ENCODE measurements at regions of chr3 and their contacts with region 1.

Region 1: GRCh38 chr3:186783073-186783730 is at the start of gene EIF4A2:
- DNase-seq: peak; percentile 84 to 96 (median 89)
- ATAC-seq: peak; percentile 68
- H3K4me3 ChIP-seq: peak within 1 kb of the TSS; percentile 92
- H3K4me3 Mint-ChIP-seq: peak within 1 kb of the TSS; percentile 95
- H3K27ac ChIP-seq: peak within 1 kb of the TSS; percentile 96 to 99
- H3K27ac Mint-ChIP-seq: peak within 1 kb of the TSS; percentile 96
- H3K4me1 ChIP-seq: peaks cover 32% of the 10 kb centered on the region
- H3K4me1 Mint-ChIP-seq: peaks cover 59% of the 10 kb centered on the region
- H3K27me3 ChIP-seq: no peaks in the 10 kb centered on the region
- H3K27me3 Mint-ChIP-seq: peaks cover 5% of the 10 kb centered on the region
- CTCF ChIP-seq: no peak
- total RNA-seq, gene EIF4A2: 1,039 to 1,046 TPM

Region 2: GRCh38 chr3:185937689-185938463 is 845.3 kb before region 1 on chr3 and contains the start of gene TRA2B:
- CTCF ChIA-PET with region 1: no interaction called
- POLR2A ChIA-PET with region 1: interaction called, 72 read pairs
- intact Hi-C with region 1: loop called (anchors 5 kb)
- DNase-seq: peak; percentile 97 to 99 (median 98)
- ATAC-seq: peak; percentile 88
- H3K4me3 ChIP-seq: peak within 1 kb of the TSS; percentile 96
- H3K4me3 Mint-ChIP-seq: peak within 1 kb of the TSS; percentile 97
- H3K27ac ChIP-seq: peak within 1 kb of the TSS; percentile 100
- H3K27ac Mint-ChIP-seq: peak within 1 kb of the TSS; percentile 98
- H3K4me1 ChIP-seq: peaks cover 7% of the 10 kb centered on the region
- H3K4me1 Mint-ChIP-seq: peaks cover 54% of the 10 kb centered on the region
- H3K27me3 ChIP-seq: no peaks in the 10 kb centered on the region
- H3K27me3 Mint-ChIP-seq: no peaks in the 10 kb centered on the region
- CTCF ChIP-seq: no peak
- total RNA-seq, gene TRA2B: 549 to 585 TPM

Region 3: GRCh38 chr3:186617038-186617946 is 165.9 kb before region 1 on chr3:
- CTCF ChIA-PET with region 1: interaction called, 5 read pairs
- POLR2A ChIA-PET with region 1: interaction called, 25 read pairs
- intact Hi-C with region 1: no loop called
- DNase-seq: peak; percentile 72 to 95 (median 84)
- ATAC-seq: peak; percentile 97
- H3K4me3 ChIP-seq: peak overlapping the region; percentile 19
- H3K4me3 Mint-ChIP-seq: peak overlapping the region; percentile 46
- H3K27ac ChIP-seq: no peak overlapping the region
- H3K27ac Mint-ChIP-seq: peak overlapping the region; percentile 30
- H3K4me1 ChIP-seq: peaks cover 19% of the 10 kb centered on the region
- H3K4me1 Mint-ChIP-seq: peaks cover 19% of the 10 kb centered on the region
- H3K27me3 ChIP-seq: peaks cover 0 to 9% of the 10 kb centered on the region in 2 experiments
- H3K27me3 Mint-ChIP-seq: peaks cover 30% of the 10 kb centered on the region
- CTCF ChIP-seq: peak; percentile 94

Region 4: GRCh38 chr3:186806089-186807055 is 23.2 kb after region 1 on chr3 and contains the start of gene RFC4:
- CTCF ChIA-PET with region 1: interaction called, 5 read pairs
- POLR2A ChIA-PET with region 1: interaction called, 112 read pairs
- intact Hi-C with region 1: loop called (anchors 1 kb)
- DNase-seq: peak; percentile 67 to 90 (median 82)
- ATAC-seq: peak; percentile 88
- H3K4me3 ChIP-seq: peak within 1 kb of the TSS; percentile 83
- H3K4me3 Mint-ChIP-seq: peak within 1 kb of the TSS; percentile 98
- H3K27ac ChIP-seq: peak within 1 kb of the TSS; percentile 73 to 92
- H3K27ac Mint-ChIP-seq: peak within 1 kb of the TSS; percentile 98
- H3K4me1 ChIP-seq: peaks cover 25% of the 10 kb centered on the region
- H3K4me1 Mint-ChIP-seq: peaks cover 27% of the 10 kb centered on the region
- H3K27me3 ChIP-seq: no peaks in the 10 kb centered on the region
- H3K27me3 Mint-ChIP-seq: no peaks in the 10 kb centered on the region
- CTCF ChIP-seq: no peak
- total RNA-seq, gene RFC4: 8.6 to 12.6 TPM

Region 5: GRCh38 chr3:186909078-186909853 is 126.1 kb after region 1 on chr3:
- CTCF ChIA-PET with region 1: no interaction called
- POLR2A ChIA-PET with region 1: interaction called, 13 read pairs
- intact Hi-C with region 1: no loop called
- DNase-seq: peak; percentile 68 to 93 (median 82)
- ATAC-seq: peak; percentile 93
- H3K4me3 ChIP-seq: peak overlapping the region; percentile 33
- H3K4me3 Mint-ChIP-seq: peak overlapping the region; percentile 81
- H3K27ac ChIP-seq: peak overlapping the region; percentile 64 to 69
- H3K27ac Mint-ChIP-seq: peak overlapping the region; percentile 98
- H3K4me1 ChIP-seq: peaks cover 29% of the 10 kb centered on the region
- H3K4me1 Mint-ChIP-seq: peaks cover 44% of the 10 kb centered on the region
- H3K27me3 ChIP-seq: no peaks in the 10 kb centered on the region
- H3K27me3 Mint-ChIP-seq: no peaks in the 10 kb centered on the region
- CTCF ChIP-seq: no peak

Region 6: DNA sequence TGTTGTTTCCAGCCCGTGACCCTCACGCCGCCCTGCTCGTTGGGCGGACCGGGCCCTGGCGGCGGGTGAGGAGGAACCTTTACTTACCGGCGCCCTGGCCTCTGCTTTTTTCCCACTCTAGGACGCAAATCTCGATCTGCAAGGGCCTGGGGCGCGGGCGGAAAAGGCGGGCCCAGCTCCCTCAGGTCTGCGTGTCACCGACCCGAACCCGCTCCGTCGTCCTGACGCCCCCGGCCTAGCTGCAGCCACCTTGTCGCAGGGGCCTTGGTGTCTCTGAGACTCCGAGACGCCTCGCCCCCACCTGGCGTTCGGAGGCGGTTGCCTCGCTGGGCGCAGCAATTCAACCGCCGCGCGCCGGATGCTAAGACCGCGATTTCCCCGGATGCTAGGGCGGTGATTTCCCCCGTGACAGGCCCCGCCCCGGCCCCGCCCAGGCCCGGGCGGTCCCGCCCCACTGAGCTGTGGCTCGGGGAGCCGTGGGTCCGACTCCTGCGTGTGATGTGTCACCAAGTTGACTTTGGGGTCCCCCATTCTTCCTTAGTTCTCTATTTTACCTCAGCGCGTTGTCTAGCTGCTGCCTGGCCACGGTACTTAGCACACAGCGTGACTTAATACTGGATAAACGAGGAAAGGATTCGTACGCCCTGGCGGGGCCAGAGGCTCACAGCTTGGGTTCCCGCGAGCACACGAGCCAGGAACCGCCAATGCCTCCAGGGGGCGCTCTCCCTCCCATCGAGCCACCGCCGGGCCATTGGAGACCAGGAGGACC is 356.1 kb after region 1 on chr3 and contains the start of gene RPL39L:
- CTCF ChIA-PET with region 1: interaction called, 3 read pairs
- POLR2A ChIA-PET with region 1: interaction called, 17 read pairs
- intact Hi-C with region 1: loop called in 1 of 2 experiments (anchors 5 kb)
- DNase-seq: peak; percentile 85 to 97 (median 90)
- ATAC-seq: peak; percentile 95
- H3K4me3 ChIP-seq: peak within 1 kb of the TSS; percentile 69
- H3K4me3 Mint-ChIP-seq: peak within 1 kb of the TSS; percentile 90
- H3K27ac ChIP-seq: peak within 1 kb of the TSS; percentile 81 to 85
- H3K27ac Mint-ChIP-seq: peak within 1 kb of the TSS; percentile 93
- H3K4me1 ChIP-seq: peaks cover 16% of the 10 kb centered on the region
- H3K4me1 Mint-ChIP-seq: peaks cover 16% of the 10 kb centered on the region
- H3K27me3 ChIP-seq: no peaks in the 10 kb centered on the region
- H3K27me3 Mint-ChIP-seq: no peaks in the 10 kb centered on the region
- CTCF ChIP-seq: peak; percentile 97
- total RNA-seq, gene RPL39L: 1.1 to 1.7 TPM